Heart right ventricle (tissue), 16 donors: ENCODE measurements at regions of chr3 and their contacts with region 1.

Region 1: DNA sequence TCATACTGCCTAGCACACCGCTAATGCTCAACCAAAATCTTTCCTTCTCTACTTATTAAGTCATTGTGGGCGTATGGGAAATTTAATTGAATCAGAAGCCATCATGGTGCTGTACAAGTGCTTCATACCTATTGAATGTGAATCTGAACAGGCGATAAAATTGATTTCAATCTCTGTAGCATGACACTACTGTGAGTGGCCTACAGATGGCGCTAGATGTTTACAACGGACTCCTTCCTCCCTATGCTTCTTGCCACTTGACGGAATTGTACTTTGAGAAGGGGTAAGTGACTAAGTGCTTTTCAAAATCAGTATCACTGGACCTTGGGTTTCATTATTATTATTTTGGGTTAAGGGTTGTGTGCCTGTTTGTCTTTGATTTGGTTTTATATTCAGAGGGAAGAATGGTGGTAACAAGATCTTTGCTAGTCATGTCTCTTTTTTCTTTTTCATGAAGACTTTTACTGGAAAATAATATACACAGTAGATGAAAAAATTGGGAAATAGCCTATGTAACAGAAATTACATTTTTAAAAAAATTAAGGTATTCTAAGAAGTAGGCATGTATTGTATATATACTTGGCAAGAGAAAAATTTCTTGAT is 35.4 kb downstream of the ACP3 start:
- DNase-seq: peak in 1 of 2 donors; percentile 56
- ATAC-seq: peak in 6 of 8 donors; percentile 61 to 84 (median 72)
- H3K4me3 ChIP-seq: no peak overlapping the region
- H3K27ac ChIP-seq: no peak overlapping the region
- H3K4me1 ChIP-seq: peaks cover 0 to 3% (median 0%) of the 10 kb centered on the region in 9 donors
- H3K27me3 ChIP-seq: peaks cover 0 to 10% (median 0%) of the 10 kb centered on the region in 7 donors
- CTCF ChIP-seq: peak; percentile 69 to 94 (median 93)

Region 2: DNA sequence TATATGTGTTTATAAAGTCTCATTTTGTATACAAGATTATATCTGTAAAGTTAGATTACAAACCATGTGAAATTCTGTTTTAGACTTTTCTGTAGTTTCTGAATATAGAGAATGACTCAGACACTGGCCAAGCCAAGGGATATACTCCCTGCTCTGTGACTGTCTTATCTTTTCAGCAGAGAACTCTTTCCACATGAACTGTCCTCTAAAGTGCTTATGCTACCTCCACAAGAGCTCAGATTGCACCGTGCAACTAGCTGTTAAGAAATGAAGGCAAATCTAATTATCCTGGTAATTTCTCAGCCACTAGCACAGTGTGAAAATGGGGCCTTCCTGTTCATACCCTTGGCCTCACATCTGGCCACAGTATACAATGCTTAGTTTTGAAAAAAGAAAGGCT is 273.5 kb before region 1 on chr3:
- intact Hi-C with region 1: no loop called
- DNase-seq: no peak
- ATAC-seq: peak in 4 of 8 donors; percentile 52 to 74 (median 58)
- H3K4me3 ChIP-seq: no peak overlapping the region
- H3K27ac ChIP-seq: no peak overlapping the region
- H3K4me1 ChIP-seq: no peaks in the 10 kb centered on the region
- H3K27me3 ChIP-seq: no peaks in the 10 kb centered on the region
- CTCF ChIP-seq: no peak

Region 3: GRCh38 chr3:132399054-132399929 is 46.6 kb after region 1 on chr3:
- intact Hi-C with region 1: loop called (anchors 1 to 5 kb)
- DNase-seq: peak in 1 of 2 donors; percentile 20
- ATAC-seq: peak in 3 of 8 donors; percentile 61 to 79 (median 63)
- H3K4me3 ChIP-seq: no peak overlapping the region
- H3K27ac ChIP-seq: no peak overlapping the region
- H3K4me1 ChIP-seq: peaks cover 0 to 2% (median 0%) of the 10 kb centered on the region in 9 donors
- H3K27me3 ChIP-seq: no peaks in the 10 kb centered on the region
- CTCF ChIP-seq: peak; percentile 58 to 82 (median 77)

Region 4: DNA sequence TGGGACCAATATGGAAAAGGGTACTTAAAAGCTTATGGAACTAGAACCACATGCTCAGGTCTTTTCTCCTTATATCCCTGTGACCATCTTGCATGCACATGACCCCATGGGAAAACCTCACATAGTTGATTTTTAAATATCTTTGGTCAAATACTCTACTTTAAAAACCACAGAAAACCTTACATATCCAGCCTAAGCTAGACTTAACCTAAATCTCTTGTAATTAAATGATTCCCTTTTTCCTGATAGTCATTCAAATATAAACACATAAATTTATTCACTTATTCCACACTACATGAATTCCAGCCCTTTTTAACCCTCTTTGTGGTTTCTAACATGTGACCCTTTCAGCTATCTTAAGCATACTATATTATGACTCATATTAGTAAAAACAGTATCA is 111.4 kb after region 1 on chr3:
- intact Hi-C with region 1: loop called in 1 of 10 experiments (anchors 10 kb)
- DNase-seq: no peak
- ATAC-seq: no peak
- H3K4me3 ChIP-seq: no peak overlapping the region
- H3K27ac ChIP-seq: no peak overlapping the region
- H3K4me1 ChIP-seq: peaks cover 0 to 5% (median 0%) of the 10 kb centered on the region in 9 donors
- H3K27me3 ChIP-seq: no peaks in the 10 kb centered on the region
- CTCF ChIP-seq: no peak

Region 5: GRCh38 chr3:132641837-132642538 is 289.3 kb after region 1 on chr3:
- intact Hi-C with region 1: loop called in 3 of 10 experiments (anchors 10 kb)
- DNase-seq: no peak
- ATAC-seq: peak in 4 of 8 donors; percentile 48 to 72 (median 66)
- H3K4me3 ChIP-seq: no peak overlapping the region
- H3K27ac ChIP-seq: no peak overlapping the region
- H3K4me1 ChIP-seq: peaks cover 0 to 7% (median 0%) of the 10 kb centered on the region in 9 donors
- H3K27me3 ChIP-seq: no peaks in the 10 kb centered on the region
- CTCF ChIP-seq: peak; percentile 69 to 89 (median 84)